Activated CD4-positive, alpha-beta T cell treated with anti-CD3 and anti-CD28 coated beads for 36 hours (primary cell): ENCODE measurements at regions of chr12 and their contacts with region 1.

Region 1: GRCh38 chr12:98397316-98398105 is 117.9 kb upstream of the TMPO start:
- DNase-seq: peak; percentile 89
- ATAC-seq: peak; percentile 92
- H3K4me3 Mint-ChIP-seq: peak overlapping the region; percentile 65
- H3K27ac Mint-ChIP-seq: peak overlapping the region; percentile 55
- H3K4me1 Mint-ChIP-seq: peaks cover 30% of the 10 kb centered on the region
- H3K27me3 Mint-ChIP-seq: no peaks in the 10 kb centered on the region

Region 2: GRCh38 chr12:97308576-97309198 is 1088.8 kb before region 1 on chr12:
- CTCF ChIA-PET with region 1: no interaction called
- POLR2A ChIA-PET with region 1: no interaction called
- intact Hi-C with region 1: loop called (anchors 5 to 10 kb)
- DNase-seq: no peak
- ATAC-seq: no peak
- H3K4me3 Mint-ChIP-seq: no peak overlapping the region
- H3K27ac Mint-ChIP-seq: no peak overlapping the region
- H3K4me1 Mint-ChIP-seq: no peaks in the 10 kb centered on the region
- H3K27me3 Mint-ChIP-seq: peaks cover 5% of the 10 kb centered on the region

Region 3: DNA sequence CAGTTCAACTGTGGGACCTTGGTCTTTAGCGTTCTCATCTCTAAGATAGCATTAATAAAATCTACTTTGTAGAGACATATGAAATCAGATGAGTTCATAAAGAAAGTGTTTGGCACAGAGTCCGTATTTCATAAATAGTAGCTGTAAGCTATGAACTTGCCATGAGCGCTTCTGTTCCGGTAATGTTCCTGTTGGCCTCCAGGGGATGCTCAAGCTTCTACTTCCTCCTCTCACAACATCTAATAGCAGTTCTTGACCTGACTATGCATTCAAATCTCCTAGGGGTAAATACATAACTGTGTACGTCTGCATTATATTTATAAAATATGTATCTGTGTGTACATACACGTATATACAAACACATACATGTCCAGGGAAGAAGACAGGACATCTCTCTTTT is 170.3 kb before region 1 on chr12:
- CTCF ChIA-PET with region 1: no interaction called
- POLR2A ChIA-PET with region 1: no interaction called
- intact Hi-C with region 1: loop called in 1 of 2 experiments (anchors 1 kb)
- DNase-seq: no peak
- ATAC-seq: no peak
- H3K4me3 Mint-ChIP-seq: no peak overlapping the region
- H3K27ac Mint-ChIP-seq: no peak overlapping the region
- H3K4me1 Mint-ChIP-seq: no peaks in the 10 kb centered on the region
- H3K27me3 Mint-ChIP-seq: peaks cover 5% of the 10 kb centered on the region

Region 4: DNA sequence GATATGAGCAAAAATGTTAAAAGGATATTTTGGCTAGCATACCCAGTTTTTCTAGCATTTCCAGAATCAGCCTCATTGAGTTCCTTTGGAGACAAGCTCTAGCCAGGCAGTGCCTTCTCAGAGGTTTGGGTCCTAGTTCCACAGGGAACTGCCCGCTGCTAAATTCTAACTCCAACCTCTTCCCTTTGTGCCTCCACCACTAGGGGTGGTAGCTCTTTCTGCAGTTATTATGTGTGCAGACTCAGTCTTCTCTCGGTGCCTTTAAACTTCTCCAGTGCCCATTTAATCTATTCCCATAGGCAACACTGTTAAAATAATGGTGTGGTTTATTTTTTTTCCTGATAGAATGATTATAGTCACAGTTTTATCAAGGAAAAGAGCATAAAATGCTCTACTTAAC is 174.5 kb after region 1 on chr12:
- CTCF ChIA-PET with region 1: no interaction called
- POLR2A ChIA-PET with region 1: no interaction called
- intact Hi-C with region 1: no loop called
- DNase-seq: no peak
- ATAC-seq: no peak
- H3K4me3 Mint-ChIP-seq: no peak overlapping the region
- H3K27ac Mint-ChIP-seq: no peak overlapping the region
- H3K4me1 Mint-ChIP-seq: peaks cover under 1% of the 10 kb centered on the region
- H3K27me3 Mint-ChIP-seq: no peaks in the 10 kb centered on the region

Region 5: DNA sequence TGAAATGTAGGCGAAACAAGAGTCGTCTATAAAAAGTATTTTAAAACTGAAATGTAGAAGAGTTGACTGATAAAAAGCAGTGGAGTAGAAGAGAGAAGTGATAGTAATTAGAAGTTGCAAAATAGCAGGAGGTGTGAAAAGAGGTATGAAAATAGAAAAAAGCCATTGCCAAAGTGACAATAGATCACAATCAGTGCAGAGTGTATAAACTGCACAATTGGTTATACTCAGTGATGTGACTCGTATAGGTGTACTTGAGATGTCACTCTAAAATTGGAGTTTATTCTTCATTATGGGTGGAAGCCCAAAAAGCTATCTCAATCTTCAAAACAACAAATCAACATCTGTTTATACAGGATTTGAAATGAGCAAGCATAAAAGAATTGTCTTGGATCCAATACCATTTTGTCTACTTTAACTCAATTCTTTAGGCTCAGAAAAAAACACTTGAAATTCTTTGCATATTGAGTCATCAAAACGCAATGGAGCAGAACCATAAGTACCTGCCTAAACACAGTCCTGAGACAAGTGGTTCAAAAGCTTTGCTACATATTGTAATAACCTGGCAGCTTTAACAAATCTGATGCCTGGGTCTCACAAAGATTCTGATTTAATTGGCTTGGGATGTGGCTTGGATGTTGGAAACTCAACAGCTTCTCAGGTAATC is 238.3 kb after region 1 on chr12:
- CTCF ChIA-PET with region 1: interaction called, 10 read pairs
- POLR2A ChIA-PET with region 1: no interaction called
- intact Hi-C with region 1: no loop called
- DNase-seq: no peak
- ATAC-seq: no peak
- H3K4me3 Mint-ChIP-seq: no peak overlapping the region
- H3K27ac Mint-ChIP-seq: no peak overlapping the region
- H3K4me1 Mint-ChIP-seq: peaks cover 11% of the 10 kb centered on the region
- H3K27me3 Mint-ChIP-seq: no peaks in the 10 kb centered on the region